Endothelial cell of umbilical vein (primary cell): ENCODE measurements at regions of chr2 and their contacts with region 1.

Region 1: DNA sequence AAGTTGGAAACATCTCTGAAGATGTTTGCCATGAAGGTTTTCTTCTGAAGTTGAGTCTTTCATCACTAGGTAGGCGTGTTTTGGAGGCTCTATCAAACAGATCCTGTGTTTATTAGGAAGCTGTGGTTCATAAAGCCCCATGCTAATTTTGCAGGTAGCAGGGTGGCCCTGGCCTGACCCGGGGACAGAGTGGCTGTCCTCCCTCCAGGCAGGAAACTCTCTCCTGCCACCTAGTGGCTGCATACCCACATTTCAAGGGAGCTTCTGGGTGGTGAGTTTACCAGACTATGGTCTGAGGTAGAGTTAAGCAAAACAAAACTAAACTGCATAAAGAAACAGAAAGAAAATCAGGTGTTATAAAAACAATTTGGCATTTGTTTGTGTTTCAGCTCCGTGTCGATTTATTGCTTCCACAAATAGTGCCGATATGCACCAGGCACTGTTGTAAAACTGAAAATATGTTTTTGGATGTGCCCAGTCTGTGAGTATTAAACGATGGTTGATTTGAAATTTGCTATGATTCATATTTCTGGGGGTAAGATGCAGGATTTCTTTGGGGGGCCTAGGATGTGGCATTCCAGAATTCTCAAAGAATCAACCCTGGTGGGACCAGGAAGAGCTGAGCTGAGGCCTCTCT is 26.0 kb upstream of the IL37 start:
- DNase-seq: peak; percentile 38
- H3K4me3 ChIP-seq: no peak overlapping the region
- H3K27ac ChIP-seq: no peak overlapping the region
- H3K4me1 ChIP-seq: peaks cover 19% of the 10 kb centered on the region
- H3K27me3 ChIP-seq: no peaks in the 10 kb centered on the region
- CTCF ChIP-seq: peak; percentile 59 to 74
- POLR2A ChIP-seq: no peak

Region 2: GRCh38 chr2:112737542-112738232 is 147.3 kb before region 1 on chr2:
- CTCF ChIA-PET with region 1: interaction called, 14 read pairs
- POLR2A ChIA-PET with region 1: no interaction called
- dilution Hi-C with region 1: no loop called
- intact Hi-C with region 1: no loop called
- DNase-seq: no peak
- H3K4me3 ChIP-seq: no peak overlapping the region
- H3K27ac ChIP-seq: no peak overlapping the region
- H3K4me1 ChIP-seq: no peaks in the 10 kb centered on the region
- H3K27me3 ChIP-seq: no peaks in the 10 kb centered on the region
- CTCF ChIP-seq: no peak
- POLR2A ChIP-seq: no peak

Region 3: DNA sequence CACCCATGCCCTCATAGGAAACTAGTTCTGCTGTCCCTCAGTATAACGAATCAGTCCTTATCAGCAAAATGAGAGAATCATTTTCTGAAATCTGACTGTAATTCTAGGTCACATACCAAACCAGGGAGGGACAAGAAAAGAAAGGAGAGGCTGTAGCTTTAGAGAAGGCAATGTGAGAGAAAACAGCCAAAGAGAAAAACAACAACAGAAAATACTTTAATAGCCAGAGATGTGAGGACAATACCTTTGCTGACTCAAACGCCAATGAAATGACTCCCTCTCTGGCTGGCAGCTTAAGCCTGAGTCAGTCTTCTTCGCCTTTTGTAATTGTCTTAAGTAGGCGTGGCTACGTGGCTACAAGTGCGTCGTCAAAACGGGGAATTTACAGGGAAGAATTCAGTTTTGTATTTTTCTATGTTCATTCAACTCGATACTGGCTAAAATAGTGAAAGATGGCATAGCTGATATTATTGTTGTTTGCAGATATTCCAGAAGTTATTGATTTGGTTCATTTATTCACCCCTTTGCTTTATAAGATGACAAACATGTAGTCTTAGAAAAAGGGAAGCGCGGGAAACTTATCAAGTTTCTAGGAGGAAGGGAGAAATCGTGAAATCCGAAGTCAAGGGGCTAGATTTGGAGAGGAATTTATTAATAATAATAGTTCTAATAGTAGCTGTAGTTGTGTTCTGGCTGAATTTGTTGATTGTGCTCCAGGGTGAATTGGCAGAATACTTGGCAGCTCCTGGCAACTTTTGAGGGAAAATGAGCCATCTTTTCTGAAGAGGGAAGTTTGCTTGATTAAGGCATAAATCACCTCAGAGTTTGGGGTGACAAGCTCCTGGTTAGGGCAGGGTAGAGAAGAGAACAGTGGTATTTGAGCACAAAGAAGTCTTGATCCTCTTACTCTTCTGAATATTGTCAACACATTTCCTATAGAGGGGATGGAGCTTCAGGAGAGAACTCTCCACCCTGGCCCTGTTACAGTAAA is 100.5 kb before region 1 on chr2 and contains the start of gene IL1A:
- CTCF ChIA-PET with region 1: interaction called, 8 read pairs
- POLR2A ChIA-PET with region 1: no interaction called
- dilution Hi-C with region 1: no loop called
- intact Hi-C with region 1: loop called (anchors 1 kb)
- DNase-seq: peak; percentile 73
- H3K4me3 ChIP-seq: peak within 1 kb of the TSS in 1 of 3 experiments; percentile 37
- H3K27ac ChIP-seq: peak within 1 kb of the TSS; percentile 73
- H3K4me1 ChIP-seq: peaks cover 43% of the 10 kb centered on the region
- H3K27me3 ChIP-seq: no peaks in the 10 kb centered on the region
- CTCF ChIP-seq: no peak
- POLR2A ChIP-seq: no peak
- total RNA-seq, gene IL1A: 0.99 and 1.4 TPM in 2 replicates

Region 4: DNA sequence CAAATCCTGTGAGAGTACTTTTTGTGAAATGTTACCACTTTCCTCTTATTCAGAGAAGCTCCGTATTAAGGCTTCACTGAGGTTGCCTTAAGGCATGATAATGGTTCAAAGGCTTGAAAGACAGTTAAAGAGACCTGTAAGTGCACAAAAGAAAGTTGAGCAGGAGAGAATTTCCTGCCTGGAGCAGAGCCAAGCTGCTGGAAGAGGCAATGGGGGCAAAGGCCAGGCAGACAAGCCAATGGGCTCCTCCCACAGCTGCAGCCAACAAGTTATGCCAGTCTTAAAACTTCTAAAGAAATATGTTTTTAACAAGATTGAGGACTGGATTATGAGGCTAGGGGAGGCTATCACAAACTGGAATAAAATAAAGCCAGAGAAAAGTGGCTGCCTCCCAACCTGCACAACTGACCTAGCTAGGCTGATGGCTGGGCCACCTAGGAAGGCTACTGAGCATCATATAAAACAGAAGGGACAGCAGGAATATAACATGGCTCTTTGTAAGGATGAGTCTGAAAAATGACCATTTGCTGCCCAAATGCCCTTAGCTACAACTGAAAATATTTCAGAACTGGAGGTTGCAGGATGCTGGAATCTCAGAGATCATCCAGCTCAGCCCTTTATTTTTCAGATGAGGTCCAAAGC is 50.5 kb before region 1 on chr2:
- CTCF ChIA-PET with region 1: interaction called, 11 read pairs
- POLR2A ChIA-PET with region 1: no interaction called
- dilution Hi-C with region 1: no loop called
- intact Hi-C with region 1: loop called (anchors 2 kb)
- DNase-seq: peak; percentile 28
- H3K4me3 ChIP-seq: no peak overlapping the region
- H3K27ac ChIP-seq: no peak overlapping the region
- H3K4me1 ChIP-seq: peaks cover 19% of the 10 kb centered on the region
- H3K27me3 ChIP-seq: peaks cover 0 to 12% of the 10 kb centered on the region in 2 experiments
- CTCF ChIP-seq: no peak
- POLR2A ChIP-seq: no peak